ENCODE measurements at regions of chr7 and their contacts with region 1.

Region 1: DNA sequence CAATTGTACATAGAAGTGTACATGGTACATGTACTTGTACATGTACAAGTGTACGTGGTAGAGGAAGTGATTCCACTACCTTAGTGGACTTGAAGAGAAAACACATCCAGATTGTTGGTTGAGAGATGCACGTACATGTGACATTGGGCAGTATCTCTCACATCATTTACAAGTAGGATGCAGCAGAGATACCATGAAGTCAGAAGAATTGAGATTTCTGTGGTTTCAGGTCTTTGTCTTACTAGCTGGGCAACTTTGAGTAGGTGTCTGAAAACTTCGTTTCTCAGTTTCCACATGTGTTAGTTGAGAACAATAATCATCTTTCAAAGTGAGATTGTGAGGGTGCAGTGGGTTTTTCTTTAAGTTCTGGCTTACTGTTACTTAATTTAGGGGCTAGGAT is 21.5 kb downstream of the CLDN12 start:
- DNase-seq: no peak
- H3K4me3 Mint-ChIP-seq: peak overlapping the region; percentile 9
- H3K27ac Mint-ChIP-seq: peak overlapping the region; percentile 80
- H3K4me1 Mint-ChIP-seq: peaks cover 29% of the 10 kb centered on the region
- H3K27me3 Mint-ChIP-seq: peaks cover 5% of the 10 kb centered on the region

Region 2: DNA sequence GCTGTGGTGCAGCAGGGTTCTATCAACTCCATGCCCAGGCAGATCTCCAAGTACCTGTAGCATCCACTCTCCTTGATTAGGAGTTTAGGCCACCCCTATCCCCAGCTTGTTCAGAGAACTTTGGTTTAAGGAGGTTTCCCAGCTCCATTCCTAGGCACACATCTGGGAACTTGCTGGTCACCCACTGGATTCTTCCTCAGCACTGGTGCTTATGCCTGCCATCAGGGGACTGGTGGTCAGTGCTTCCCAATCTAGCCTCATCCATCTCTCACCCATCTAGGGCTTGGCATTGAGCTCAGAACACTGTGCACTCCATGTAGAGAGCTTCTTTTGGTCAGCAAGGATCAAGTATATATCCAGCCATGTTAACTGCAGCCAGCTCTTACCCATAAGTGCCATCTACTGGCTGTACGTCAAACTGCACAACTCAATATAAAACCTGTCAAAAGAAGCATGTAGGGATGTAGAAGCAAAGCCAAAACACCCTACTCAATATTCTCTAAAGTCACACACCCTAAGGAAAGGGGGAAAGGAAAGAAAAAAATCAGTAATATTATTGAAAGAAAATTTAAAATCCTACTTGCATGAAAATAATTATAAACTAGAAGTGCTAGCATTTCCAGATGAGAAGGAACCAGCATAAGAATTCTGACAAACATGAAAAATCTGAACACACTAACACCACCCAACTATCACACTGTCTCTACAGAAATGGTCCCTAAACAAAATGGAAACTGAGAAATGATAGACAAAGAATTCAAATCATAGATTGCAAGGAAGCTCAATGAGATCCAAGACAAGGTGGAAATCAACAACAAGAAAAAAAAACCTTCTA is 801.7 kb before region 1 on chr7:
- intact Hi-C with region 1: loop called (anchors 10 kb)
- DNase-seq: no peak
- H3K4me3 Mint-ChIP-seq: no peak overlapping the region
- H3K27ac Mint-ChIP-seq: no peak overlapping the region
- H3K4me1 Mint-ChIP-seq: peaks cover 22% of the 10 kb centered on the region
- H3K27me3 Mint-ChIP-seq: no peaks in the 10 kb centered on the region

Region 3: GRCh38 chr7:90244909-90245851 is 179.5 kb before region 1 on chr7 and contains the start of gene CFAP69:
- intact Hi-C with region 1: loop called (anchors 1 kb)
- DNase-seq: peak; percentile 77
- H3K4me3 Mint-ChIP-seq: peak within 1 kb of the TSS; percentile 85
- H3K27ac Mint-ChIP-seq: no peak within 1 kb of the TSS
- H3K4me1 Mint-ChIP-seq: peaks cover 11% of the 10 kb centered on the region
- H3K27me3 Mint-ChIP-seq: peaks cover 41% of the 10 kb centered on the region
- total RNA-seq, gene CFAP69: 0.34 and 0.51 TPM in 2 replicates

Region 4: DNA sequence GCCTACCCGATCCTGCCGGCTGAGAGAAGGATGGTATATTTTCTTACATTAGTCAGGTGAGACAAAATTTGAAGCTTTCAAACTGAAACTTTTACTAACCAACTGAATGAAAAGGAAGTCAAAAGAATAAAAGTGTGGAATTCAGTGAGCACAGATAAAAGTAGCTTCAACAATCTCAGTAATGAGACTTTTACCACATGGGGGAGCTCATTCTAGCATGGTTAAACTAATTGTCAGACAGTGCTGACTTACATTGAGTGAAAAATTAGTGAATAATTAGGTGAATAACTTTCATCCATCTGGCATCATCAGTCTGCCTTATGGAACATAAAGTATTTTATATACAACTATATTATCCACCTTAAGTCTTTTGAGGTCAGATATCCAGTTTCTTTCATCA is 112.0 kb before region 1 on chr7:
- intact Hi-C with region 1: loop called (anchors 2 kb)
- DNase-seq: no peak
- H3K4me3 Mint-ChIP-seq: no peak overlapping the region
- H3K27ac Mint-ChIP-seq: no peak overlapping the region
- H3K4me1 Mint-ChIP-seq: no peaks in the 10 kb centered on the region
- H3K27me3 Mint-ChIP-seq: peaks cover 30% of the 10 kb centered on the region

Region 5: DNA sequence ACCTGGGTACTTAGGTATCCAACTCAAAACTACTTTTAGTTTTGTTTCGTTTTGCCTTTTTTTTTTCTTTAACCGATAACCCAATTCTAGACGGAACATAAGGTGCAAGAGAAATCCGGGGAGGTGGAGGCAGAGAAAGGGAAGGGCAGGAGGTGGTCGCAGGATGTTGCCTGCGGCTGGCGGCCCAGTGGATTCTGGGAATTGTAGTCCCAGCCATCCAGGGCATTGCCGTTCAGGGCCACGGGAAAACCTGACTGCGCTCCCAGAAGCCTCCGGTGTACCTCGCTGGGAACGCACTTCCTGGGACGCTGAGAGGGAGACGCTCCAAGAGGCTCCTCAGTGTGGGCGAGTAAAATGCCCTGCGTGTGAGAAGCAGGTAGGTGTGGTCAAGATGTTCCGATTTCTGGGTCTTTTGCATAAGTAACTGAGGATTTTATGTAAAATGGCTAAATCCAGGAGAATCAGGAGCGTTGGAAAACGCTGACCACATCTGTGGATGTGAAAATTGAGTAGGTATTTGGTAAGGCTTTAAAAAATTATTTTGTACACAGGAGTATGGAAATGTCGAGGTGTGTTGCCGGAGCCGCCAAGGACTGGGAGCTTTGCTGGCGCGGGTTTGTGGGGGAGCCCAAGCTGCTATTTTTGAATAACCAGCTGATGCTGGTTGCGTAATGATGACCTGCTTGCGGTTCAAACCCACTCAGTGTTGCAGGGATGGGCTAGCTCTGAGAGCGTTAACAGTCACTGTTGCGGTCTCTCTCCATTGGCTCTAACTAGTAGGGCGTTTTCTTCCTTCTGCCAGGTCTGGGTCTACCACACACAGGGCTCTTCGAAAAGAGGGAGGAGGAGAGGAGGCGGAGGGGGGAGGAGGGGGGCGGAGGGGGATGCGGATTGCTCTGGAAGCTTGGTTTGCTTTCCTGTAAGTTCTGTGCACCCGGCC is 21.3 kb before region 1 on chr7 and contains the start of gene CLDN12:
- intact Hi-C with region 1: loop called (anchors 1 kb)
- DNase-seq: peak; percentile 68
- H3K4me3 Mint-ChIP-seq: peak within 1 kb of the TSS; percentile 97
- H3K27ac Mint-ChIP-seq: peak within 1 kb of the TSS; percentile 92
- H3K4me1 Mint-ChIP-seq: peaks cover 21% of the 10 kb centered on the region
- H3K27me3 Mint-ChIP-seq: peaks cover 20% of the 10 kb centered on the region
- total RNA-seq, gene CLDN12: 7.1 and 7.2 TPM in 2 replicates

Region 6: DNA sequence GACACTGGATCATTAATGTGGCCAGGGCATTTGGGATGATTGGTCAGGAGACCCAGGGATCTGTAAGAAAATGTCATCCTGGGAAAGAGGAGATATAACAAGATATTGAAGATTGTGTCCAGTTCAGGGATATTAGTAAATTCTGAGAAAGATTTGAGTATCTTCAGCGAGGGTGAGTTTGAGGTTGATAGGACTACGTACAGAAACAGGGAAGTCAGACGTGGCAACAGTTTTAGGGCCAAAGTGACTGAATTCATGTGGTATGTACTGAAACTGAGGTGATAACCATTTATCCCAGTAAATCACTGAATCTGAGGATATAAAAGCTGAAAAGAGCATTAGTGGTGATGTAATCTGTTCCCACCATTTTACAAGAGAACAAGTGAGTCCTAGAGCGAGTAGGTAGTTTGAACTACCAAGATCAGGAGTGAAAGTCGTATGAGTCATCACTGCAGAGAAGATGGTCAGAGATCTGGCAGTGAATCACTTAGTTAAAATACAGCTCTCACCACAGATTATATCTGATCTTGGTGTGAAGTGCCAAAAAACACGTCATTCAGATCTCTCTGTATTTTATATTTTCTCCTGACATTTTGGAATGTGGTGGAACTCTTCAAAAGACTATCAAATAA is 391.9 kb after region 1 on chr7:
- intact Hi-C with region 1: loop called (anchors 1 kb)
- DNase-seq: no peak
- H3K4me3 Mint-ChIP-seq: no peak overlapping the region
- H3K27ac Mint-ChIP-seq: no peak overlapping the region
- H3K4me1 Mint-ChIP-seq: peaks cover 14% of the 10 kb centered on the region
- H3K27me3 Mint-ChIP-seq: peaks cover 6% of the 10 kb centered on the region